Left colon (tissue), 2 donors: ENCODE measurements at regions of chr2 and their contacts with region 1.

Region 1: GRCh38 chr2:45650851-45651414 is 542 bp upstream of the PRKCE start:
- DNase-seq: peak; percentile 95 to 96
- ATAC-seq: peak; percentile 73

Region 2: DNA sequence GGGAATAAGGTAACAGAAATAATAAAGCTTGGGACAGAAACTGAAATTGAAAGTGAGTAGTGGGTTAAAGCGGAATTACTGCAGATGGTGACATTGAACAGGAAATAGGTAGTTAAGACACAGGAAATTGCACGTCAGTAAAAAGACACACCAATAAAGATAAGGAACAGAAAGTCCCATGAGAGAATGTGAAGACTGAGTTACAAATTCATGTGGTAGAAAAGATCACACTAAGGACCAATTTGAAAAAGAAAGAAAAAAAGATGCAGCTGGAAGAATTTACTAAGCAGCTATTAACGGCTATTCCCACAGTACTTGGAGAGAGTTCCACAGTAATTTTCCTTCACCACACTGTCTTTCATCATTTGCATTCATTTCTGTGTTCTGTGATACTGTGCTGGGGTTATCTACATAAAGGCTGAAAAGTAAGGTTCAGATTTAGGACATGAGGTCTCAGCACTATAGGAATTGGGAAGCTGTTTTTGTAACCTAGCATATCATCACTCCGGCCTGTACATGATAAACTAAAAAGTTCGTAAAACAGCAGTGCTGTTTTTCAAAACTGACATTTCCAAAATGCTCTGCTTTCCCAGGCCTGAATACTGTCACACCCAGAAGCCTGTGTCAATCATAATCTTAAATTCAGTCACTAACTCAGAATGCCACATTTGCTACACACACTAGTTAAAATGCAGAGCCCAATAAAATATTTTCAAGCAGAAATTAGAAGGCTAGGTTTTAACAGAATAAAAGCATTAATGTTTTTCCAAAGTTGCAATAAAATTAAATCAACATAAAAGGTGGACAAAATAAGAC is 82.8 kb before region 1 on chr2:
- intact Hi-C with region 1: no loop called
- DNase-seq: no peak
- ATAC-seq: peak; percentile 97

Region 3: DNA sequence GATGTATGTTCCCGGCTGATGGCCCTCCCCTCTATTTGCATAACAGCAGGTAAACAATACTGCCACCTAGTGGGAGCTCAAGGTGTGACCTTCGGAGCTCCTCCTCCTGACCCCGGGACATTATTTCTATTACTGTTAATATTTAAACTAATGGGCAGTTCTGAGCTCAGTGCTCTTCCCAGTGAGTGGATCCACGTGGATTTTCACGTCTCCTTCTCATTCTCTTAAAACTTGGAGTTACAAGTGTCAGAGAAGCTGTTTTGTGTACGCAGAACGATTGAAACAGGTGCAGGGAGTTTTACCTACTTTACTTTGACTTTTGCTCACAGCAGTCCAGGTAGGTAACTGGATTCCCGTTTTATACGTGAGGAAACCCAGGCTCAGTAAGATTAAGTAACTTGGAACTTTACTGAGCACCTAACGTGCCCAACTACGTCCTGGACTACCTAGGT is 127.8 kb after region 1 on chr2:
- intact Hi-C with region 1: loop called (anchors 5 kb)
- DNase-seq: peak; percentile 61 to 75
- ATAC-seq: peak; percentile 64

Region 4: DNA sequence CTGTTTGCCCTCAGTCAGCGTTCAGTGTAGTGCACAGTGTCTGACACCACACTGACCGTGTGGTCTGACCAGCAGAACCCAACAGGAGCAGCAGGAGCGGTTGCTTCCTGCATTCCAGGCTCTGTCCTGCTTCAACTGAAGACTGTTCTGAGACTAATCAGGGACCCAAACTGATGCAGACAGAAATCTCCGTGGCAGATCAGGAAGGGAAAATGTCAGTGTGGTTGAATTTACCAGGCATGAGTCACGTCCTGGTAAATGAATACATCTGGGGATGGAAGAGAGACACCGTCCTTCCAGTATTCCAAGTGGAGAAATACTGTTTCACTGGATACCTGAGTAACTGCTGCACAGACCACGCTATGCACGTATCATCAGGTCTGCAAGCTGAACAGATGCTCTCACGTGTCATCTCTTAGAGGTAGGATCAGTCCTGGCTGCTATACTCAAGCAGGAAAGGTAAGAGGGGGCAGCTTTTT is 422.6 kb after region 1 on chr2:
- intact Hi-C with region 1: no loop called
- DNase-seq: no peak
- ATAC-seq: no peak